Adrenal gland (tissue), 19 donors: ENCODE measurements at regions of chr12 and their contacts with region 1.

Region 1: GRCh38 chr12:117874842-117875434 is 93.9 kb downstream of the KSR2 start:
- DNase-seq: peak; percentile 62 to 90 (median 79)
- H3K4me3 ChIP-seq: no peak overlapping the region
- H3K27ac ChIP-seq: no peak overlapping the region
- H3K4me1 ChIP-seq: no peaks in the 10 kb centered on the region
- H3K27me3 ChIP-seq: no peaks in the 10 kb centered on the region
- CTCF ChIP-seq: peak; percentile 83 to 94 (median 90)
- POLR2A ChIP-seq: no peak

Region 2: DNA sequence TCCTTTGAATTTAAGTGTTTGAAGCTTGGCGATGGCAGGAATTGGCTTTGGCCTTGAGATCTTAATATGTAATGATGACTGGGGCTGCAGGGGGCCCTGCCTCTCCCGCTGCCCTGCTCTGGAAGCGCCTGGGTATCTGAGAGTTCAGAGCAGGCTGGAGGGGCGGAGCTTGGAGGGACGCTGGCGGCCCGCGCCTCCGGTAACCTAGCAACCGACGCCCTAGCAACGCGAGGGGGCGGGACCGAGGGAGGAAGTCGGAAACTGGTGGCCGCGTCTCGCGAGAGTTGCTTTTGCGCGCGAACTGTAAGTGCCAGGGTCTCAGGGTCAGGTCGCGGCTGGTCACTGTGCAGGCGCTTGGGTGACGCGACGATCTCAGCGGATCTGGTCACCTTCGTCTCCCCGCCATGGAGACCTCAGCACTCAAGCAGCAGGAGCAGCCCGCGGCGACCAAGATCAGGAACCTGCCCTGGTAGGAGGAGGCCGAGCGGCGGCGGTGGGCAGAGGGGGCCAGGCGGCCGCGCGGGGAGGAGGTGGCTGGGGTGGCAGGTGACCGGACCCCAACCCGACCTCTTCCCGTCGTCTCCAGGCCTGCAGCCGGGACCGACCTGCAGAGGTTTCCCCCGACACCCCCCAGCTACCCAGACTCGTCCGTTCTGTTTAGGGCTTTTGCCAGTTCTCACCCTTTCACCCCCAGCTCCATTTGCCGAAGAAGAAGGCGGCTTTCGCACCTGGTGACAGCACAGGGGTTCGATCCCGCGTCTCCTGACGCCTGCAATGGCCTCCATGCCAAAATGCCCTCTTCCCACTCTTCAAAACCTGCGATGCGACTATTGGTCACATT is 141.7 kb after region 1 on chr12 and contains the start of gene RFC5:
- intact Hi-C with region 1: loop called in 1 of 2 experiments (anchors 10 kb)
- DNase-seq: peak; percentile 97 to 99 (median 99)
- H3K4me3 ChIP-seq: peak within 1 kb of the TSS in 3 of 4 donors; percentile 1 to 84 (median 64)
- H3K27ac ChIP-seq: peak within 1 kb of the TSS in 2 of 5 donors; percentile 13 to 38
- H3K4me1 ChIP-seq: peaks cover 5 to 17% of the 10 kb centered on the region in 2 donors
- H3K27me3 ChIP-seq: no peaks in the 10 kb centered on the region
- CTCF ChIP-seq: no peak
- POLR2A ChIP-seq: peak in 1 of 2 donors; percentile 65
- total RNA-seq, gene RFC5: 5.8 to 28.0 (median 9.4) TPM

Region 3: DNA sequence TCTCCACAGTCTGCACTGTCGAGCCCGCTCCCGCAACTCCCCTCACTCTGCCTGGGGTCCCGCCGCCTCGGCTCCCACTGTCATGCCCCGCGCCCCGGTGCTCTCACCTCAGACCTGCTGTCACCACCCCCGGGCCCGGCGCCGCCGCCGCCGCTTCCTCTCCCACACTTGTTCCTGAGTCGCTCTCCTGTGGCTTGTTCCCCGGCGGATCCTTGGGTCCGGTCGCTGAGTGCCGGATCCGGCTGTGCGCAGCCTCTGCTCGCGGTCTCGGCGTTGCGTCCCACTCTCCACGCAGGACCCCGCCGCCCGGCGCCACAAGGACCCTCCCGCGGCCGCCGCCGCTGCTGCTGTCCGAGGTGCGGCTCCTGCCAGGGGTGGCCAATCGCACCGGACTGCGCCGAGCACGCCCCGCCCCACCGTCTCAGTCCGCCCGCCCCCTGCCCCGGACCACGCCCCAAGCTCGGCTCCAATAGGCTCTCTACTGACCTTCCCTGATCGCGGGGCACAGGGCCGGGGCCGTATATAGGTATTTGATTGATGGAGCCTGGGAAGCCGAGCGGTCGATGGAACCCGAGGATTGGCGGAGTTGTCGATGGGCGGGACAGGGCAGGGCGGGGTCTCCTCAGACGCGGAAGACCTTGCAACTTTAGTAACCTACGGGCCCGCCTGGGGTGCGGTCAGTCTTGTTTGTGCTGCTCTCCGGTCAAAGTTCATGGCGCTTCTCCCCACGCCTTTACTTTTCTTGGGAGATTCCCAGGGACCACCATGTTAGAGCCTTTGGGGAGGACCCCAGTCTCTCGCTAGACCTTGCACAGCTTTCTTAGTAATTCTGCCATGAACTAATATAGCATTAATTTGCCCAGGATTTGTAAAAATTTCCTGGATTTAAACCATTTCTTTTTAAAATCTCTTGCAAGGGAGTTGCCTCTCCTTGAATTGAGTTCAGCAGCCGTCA is 497.9 kb after region 1 on chr12 and contains the start of gene TAOK3:
- intact Hi-C with region 1: loop called in 1 of 2 experiments (anchors 10 kb)
- DNase-seq: peak; percentile 97 to 100 (median 99)
- H3K4me3 ChIP-seq: peak within 1 kb of the TSS; percentile 43 to 97 (median 87)
- H3K27ac ChIP-seq: peak within 1 kb of the TSS; percentile 8 to 89 (median 78)
- H3K4me1 ChIP-seq: peaks cover 0 to 37% of the 10 kb centered on the region in 2 donors
- H3K27me3 ChIP-seq: no peaks in the 10 kb centered on the region
- CTCF ChIP-seq: peak in 1 of 6 experiments; percentile 4
- POLR2A ChIP-seq: peak; percentile 70 to 92
- total RNA-seq, gene TAOK3: 24.0 to 39.7 (median 29.9) TPM